ENCODE measurements at regions of chr4 and their contacts with region 1.

Region 1: DNA sequence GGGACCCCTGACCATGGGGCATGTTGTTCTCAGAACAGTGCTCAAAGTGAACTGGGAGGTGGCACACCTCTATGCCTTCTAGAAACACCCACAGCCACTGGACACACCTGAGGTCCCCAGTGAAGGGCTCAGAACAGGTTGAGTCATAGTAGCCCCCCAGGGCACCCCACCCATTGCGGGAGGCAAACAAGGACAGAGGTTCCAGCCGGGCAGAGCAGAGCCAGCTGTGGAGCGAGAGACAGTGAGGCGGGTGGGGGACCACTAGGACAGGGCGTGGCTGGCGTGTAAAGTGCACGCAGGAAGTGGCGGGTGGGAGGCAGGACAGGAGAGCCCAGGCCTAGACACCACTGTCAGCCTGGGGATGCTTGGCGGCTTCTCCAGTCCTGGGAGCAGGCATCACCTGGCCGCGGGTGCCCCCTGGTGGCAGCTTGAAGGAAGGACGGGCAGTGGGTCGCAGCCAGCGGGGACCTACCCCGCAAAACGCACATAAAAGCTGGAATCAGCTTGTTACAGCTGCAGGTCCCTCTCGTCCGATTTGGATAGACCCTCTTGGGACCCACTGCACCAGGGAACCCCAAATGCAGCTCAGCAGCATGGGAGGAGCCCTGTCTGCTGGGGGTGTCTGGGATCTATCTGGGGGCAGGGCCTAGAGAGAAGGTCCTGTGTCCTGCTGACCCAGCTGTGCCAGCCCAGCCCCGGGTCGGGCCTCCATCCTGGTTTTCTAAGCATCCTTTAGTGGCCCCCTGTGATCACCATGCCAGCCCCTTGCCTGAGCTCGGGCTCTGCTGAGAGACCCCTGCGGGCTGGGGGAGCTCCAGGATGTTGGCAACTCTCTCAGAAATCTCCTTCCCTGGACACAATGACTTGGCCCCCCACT is 57.6 kb downstream of the WFS1 start:
- DNase-seq: peak; percentile 87 to 92
- H3K4me3 ChIP-seq: no peak overlapping the region
- H3K27ac ChIP-seq: no peak overlapping the region
- H3K4me1 ChIP-seq: peaks cover 0 to 19% (median 5%) of the 10 kb centered on the region in 4 donors
- H3K27me3 ChIP-seq: peaks cover 0 to 54% (median 5%) of the 10 kb centered on the region in 3 donors
- CTCF ChIP-seq: peak in 6 of 7 experiments; percentile 53 to 98 (median 95)
- EP300 ChIP-seq: no peak
- POLR2A ChIP-seq: no peak

Region 2: GRCh38 chr4:5988086-5988845 is 339.0 kb before region 1 on chr4:
- intact Hi-C with region 1: no loop called
- DNase-seq: peak in 1 of 2 donors; percentile 17
- H3K4me3 ChIP-seq: no peak overlapping the region
- H3K27ac ChIP-seq: no peak overlapping the region
- H3K4me1 ChIP-seq: no peaks in the 10 kb centered on the region
- H3K27me3 ChIP-seq: peaks cover 0 to 46% (median 0%) of the 10 kb centered on the region in 3 donors
- CTCF ChIP-seq: no peak
- EP300 ChIP-seq: no peak
- POLR2A ChIP-seq: no peak

Region 3: DNA sequence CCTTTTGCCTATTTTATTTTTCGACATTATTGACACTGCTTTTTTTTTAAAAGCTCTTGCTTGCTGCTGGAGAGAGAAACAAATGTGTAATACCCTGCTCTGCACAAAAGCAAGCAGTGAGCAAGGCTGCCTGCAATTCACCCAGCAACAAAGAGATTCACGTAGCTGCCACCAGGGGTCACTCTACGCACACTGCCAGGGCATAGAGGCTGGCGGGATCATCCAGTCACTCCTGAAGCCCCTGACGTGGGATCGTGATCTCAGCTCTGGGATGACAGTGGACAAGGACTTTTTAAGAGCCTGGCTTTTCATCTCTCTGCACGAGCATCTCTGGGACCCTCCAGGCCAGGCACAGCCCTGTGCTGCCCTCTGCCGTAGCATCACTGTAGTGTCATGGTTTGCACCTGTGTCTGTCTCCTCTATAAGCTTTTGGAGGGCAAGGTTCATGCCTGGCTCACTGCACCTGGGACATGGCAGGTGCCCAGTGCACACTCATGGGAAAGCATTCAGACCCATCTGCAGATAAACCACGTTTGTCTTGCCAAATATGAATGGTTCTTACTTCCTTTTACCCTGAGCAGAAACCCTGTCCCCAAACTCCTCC is 328.8 kb before region 1 on chr4:
- intact Hi-C with region 1: loop called (anchors 5 kb)
- DNase-seq: peak; percentile 66 to 90
- H3K4me3 ChIP-seq: no peak overlapping the region
- H3K27ac ChIP-seq: no peak overlapping the region
- H3K4me1 ChIP-seq: no peaks in the 10 kb centered on the region
- H3K27me3 ChIP-seq: peaks cover 0 to 36% (median 4%) of the 10 kb centered on the region in 3 donors
- CTCF ChIP-seq: peak in 5 of 7 experiments; percentile 72 to 89 (median 83)
- EP300 ChIP-seq: no peak
- POLR2A ChIP-seq: no peak

Region 4: DNA sequence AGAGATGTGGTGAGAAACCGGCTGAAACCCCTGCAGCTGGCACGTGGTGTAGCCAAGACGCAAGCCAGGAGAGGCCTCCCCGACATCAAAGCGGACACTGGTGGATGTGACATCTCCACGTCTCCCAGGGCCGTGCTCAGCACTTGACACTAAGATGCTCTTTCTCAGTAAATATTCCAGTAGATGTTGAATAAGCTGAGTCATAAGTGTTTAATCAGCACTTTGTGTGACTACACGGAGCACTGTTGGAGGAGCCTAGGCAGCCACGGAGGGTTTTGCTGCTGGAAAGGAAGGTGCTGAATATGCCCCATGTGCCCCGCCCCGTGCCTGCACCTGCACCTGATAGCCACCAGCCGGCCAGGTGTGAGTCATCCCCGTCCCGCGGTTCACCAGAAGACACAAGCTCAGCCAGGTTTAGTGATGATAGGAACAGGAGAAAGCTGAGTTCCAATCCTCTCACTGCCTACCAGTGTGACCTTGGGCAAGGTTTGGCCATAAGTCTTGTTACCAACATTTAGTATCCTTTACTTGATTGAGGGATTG is 280.1 kb before region 1 on chr4:
- intact Hi-C with region 1: no loop called
- DNase-seq: peak in 1 of 2 donors; percentile 34
- H3K4me3 ChIP-seq: no peak overlapping the region
- H3K27ac ChIP-seq: no peak overlapping the region
- H3K4me1 ChIP-seq: no peaks in the 10 kb centered on the region
- H3K27me3 ChIP-seq: peaks cover 0 to 40% (median 0%) of the 10 kb centered on the region in 3 donors
- CTCF ChIP-seq: no peak
- EP300 ChIP-seq: no peak
- POLR2A ChIP-seq: no peak

Region 5: DNA sequence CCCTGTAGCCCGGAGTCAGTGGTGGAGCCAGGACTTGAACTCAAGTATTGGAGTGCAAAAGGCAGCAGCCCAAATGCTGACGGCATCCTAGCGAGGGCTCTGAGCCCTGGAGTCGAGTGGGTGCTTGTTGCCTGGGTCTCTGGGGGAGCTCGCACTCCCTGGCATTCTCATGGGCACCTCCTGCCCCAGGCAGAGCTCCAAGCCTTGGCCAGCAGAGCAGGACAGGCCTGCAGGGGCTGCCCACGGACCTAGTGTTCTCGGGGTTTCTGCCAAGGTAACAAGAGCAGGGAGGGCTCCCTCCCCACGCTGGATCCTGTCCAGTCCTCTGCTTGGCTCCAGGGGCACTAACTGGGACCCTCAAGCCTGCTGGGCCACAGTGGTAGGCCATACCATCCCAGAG is 75.2 kb before region 1 on chr4:
- intact Hi-C with region 1: loop called (anchors 2 kb)
- DNase-seq: no peak
- H3K4me3 ChIP-seq: no peak overlapping the region
- H3K27ac ChIP-seq: no peak overlapping the region
- H3K4me1 ChIP-seq: peaks cover 0 to 3% (median 0%) of the 10 kb centered on the region in 4 donors
- H3K27me3 ChIP-seq: peaks cover 0 to 58% (median 18%) of the 10 kb centered on the region in 3 donors
- CTCF ChIP-seq: no peak
- EP300 ChIP-seq: no peak
- POLR2A ChIP-seq: no peak

Region 6: DNA sequence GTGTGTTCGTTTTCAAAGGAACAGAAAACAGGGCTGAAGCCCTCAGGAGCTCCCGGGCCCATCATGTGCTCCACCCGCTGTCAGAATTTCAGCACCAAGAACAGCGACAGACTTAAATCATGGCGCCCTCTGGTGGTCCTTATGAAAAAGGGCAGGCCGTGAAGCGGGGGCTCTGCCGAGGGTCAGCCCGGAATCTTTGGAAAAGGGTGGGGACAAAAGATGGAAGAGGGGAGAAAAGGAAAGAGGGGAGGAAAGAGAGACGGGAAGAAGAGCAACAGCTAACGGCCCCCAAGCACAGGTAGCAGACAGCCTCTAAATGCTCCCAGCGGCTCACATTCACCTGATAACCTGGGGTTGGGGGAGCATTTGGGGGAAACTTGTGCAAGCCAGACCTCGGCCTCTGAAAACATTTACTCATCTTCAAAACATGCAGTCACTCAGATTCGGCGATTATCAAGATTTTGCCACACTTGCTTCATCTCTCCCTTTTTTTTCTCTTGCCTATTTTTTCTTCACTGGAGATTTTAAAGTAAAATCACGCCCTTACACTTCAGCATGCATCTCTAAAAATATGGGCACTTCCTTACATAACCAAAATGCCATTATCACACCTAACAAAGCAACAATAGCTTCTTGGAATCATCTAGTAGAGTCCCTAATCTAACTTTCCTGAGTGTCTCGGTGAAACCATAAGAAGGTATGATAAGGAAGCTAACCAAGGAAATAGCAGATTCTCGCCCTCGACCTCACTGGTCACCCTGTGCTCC is 219.6 kb after region 1 on chr4:
- intact Hi-C with region 1: loop called (anchors 10 kb)
- DNase-seq: peak; percentile 44 to 87
- H3K4me3 ChIP-seq: no peak overlapping the region
- H3K27ac ChIP-seq: no peak overlapping the region
- H3K4me1 ChIP-seq: no peaks in the 10 kb centered on the region
- H3K27me3 ChIP-seq: peaks cover 0 to 73% (median 6%) of the 10 kb centered on the region in 3 donors
- CTCF ChIP-seq: peak in 5 of 7 experiments; percentile 55 to 82 (median 78)
- EP300 ChIP-seq: no peak
- POLR2A ChIP-seq: no peak

Measured in stomach (tissue), 19 donors.